ENCODE measurements at regions of chr11 and their contacts with region 1.

Region 1: DNA sequence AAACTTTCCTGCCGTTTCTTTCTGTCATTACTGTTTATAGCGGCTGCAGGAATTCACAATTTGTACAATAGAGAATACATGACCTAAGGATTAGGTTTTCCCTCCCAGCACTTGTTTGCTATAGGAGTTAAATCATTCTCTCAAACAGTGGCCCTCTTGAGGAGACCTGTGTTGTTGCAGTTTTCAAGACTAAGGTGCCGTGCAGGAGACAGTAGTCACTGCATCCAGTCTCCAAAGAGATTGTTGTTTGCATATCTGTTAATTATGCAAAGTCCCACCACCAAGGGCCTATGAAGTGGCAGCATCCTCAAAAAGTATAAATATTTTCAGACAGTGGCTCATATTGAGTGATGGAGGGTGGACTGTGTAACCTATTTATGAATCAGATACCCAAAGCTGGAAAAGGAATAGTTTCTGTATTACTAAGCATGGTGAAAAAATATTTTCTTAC is 2.3 kb downstream of the PRSS23 start:
- DNase-seq: peak; percentile 28
- H3K4me3 ChIP-seq: peak overlapping the region; percentile 78 to 90
- H3K27ac ChIP-seq: peak overlapping the region; percentile 78 to 83
- H3K4me1 ChIP-seq: no peaks in the 10 kb centered on the region
- H3K27me3 ChIP-seq: no peaks in the 10 kb centered on the region
- CTCF ChIP-seq: peak; percentile 39 to 69 (median 50)
- POLR2A ChIP-seq: no peak

Region 2: DNA sequence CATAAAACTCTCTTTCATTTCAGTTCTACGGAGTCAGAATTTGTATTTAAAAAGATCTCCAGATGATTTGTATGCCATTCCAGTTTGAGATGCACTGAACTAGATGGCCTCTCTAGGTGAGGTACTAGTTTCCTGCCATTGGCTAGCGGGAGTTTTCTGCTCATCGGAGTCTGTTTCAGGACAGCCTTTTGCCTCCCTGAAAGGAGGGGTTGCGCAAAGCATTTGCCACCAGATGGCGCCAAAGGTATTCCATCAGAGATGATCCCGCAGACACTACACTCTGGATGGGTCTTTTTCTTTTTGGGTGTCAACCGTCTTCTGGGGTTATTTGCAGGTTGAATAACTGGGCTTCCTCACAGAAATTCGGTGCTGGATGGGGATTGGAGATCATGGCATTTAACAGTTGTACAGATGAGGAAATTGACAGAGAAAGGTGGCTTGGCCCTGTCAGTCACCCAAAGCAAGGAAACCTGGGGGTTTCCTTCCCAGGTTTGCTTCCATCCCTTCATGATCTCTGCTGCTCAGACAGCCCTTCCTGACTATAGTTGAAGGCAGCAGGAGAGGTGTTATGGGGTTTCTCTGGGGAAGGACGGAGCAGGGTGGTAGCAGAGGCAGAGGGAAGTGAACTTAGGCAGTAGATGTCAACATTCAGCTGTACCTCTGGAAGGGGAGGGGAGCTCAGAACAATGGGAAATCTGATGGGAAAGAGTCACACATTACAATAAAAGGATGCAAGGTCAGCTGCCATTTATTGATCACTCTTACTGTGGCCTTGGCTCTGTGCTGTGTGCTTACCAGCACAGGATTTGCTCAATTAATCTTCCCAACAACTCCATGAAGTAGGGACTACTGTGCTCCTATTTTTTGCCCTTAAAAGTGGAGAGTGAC is 346.3 kb before region 1 on chr11:
- intact Hi-C with region 1: loop called (anchors 5 kb)
- DNase-seq: peak; percentile 87
- H3K4me3 ChIP-seq: no peak overlapping the region
- H3K27ac ChIP-seq: peak overlapping the region in 1 of 2 donors; percentile 37
- H3K4me1 ChIP-seq: no peaks in the 10 kb centered on the region
- H3K27me3 ChIP-seq: no peaks in the 10 kb centered on the region
- CTCF ChIP-seq: peak; percentile 70 to 92 (median 86)
- POLR2A ChIP-seq: no peak

Region 3: DNA sequence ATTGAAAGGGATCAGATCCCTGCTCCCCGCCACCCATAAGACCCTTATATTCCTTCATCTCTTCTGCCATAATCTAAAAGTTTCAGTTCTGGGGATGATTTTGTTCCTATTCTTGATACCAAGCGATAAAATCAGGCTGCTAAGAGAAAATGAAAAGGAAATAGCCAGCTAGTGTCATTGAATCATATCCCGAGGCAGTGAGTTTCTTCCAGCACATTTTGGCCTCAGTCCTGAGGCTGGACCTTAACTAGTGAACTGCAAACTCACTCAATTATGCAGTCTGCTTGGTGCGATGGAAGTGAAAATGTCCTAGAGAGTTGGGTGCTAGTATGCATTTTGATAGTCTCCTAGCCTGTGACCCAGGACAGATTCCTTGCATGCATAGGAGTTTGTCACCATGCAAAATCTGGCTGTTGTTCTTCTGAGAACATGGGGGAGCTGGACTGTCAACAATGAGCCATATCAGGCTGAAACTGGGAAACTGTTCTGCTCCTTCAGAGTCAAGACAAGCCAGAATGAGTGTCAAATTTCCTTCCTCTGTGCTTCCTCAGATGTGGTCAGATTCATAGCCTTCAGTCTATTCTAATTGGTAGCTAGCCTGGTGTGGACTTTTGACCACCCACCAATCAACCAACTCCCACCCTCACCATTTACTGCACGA is 325.0 kb before region 1 on chr11:
- intact Hi-C with region 1: loop called (anchors 5 kb)
- DNase-seq: no peak
- H3K4me3 ChIP-seq: no peak overlapping the region
- H3K27ac ChIP-seq: peak overlapping the region; percentile 2 to 38
- H3K4me1 ChIP-seq: no peaks in the 10 kb centered on the region
- H3K27me3 ChIP-seq: no peaks in the 10 kb centered on the region
- CTCF ChIP-seq: no peak
- POLR2A ChIP-seq: no peak

Region 4: GRCh38 chr11:86608251-86608799 is 194.3 kb before region 1 on chr11:
- intact Hi-C with region 1: loop called (anchors 5 kb)
- DNase-seq: peak; percentile 49
- H3K4me3 ChIP-seq: no peak overlapping the region
- H3K27ac ChIP-seq: no peak overlapping the region
- H3K4me1 ChIP-seq: no peaks in the 10 kb centered on the region
- H3K27me3 ChIP-seq: no peaks in the 10 kb centered on the region
- CTCF ChIP-seq: peak; percentile 76 to 84 (median 78)
- POLR2A ChIP-seq: no peak

Region 5: DNA sequence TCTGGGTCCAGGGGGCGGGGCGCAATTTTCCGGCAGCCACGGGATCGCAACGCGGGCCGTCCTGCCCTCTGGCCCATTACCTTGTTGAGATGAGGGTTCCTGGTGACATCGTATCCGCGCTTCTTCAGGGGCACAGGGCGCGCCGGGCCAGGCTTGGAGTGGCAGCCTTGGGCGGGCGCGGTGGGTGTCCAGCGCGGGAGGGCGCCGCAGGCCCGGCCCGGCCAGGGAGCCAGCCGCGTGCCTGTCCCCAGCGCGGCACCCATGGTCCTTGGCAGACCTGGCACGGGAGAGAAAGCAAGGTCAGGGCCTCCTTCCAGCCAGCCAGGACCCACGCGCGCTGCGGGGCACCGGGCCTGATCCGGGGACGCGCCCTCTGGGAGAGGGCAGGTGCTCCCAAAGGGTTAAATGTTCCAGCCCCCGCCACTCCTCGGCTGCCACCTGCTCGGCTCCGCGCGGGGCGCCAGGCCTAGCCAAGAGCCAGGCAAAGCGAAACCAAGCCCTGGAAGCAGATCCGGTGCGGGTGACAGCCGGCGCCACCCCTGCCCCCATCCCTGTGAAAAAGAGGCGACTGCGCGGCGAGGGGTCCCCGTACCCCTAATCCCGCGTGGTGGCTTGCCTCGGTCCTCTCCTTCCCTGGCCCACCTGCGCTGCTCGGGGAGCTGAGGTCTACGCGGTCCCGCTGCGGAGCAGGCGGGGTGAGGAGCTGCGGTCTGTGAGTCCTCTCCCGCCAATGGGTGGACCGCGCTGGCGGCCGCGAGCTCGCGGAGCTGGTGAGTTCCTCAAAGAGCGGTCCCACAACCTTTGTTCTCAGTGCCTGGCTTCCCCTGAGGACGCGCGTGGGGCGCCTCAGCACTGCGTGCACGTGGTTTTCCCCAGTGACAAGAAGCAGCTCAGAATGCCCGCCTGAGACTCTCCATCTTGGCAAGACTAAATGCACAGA is 130.7 kb before region 1 on chr11 and contains the start of gene ME3:
- intact Hi-C with region 1: loop called (anchors 5 kb)
- DNase-seq: peak; percentile 87
- H3K4me3 ChIP-seq: peak within 1 kb of the TSS; percentile 53 to 63
- H3K27ac ChIP-seq: peak within 1 kb of the TSS; percentile 91 to 92
- H3K4me1 ChIP-seq: peaks cover 3% of the 10 kb centered on the region
- H3K27me3 ChIP-seq: no peaks in the 10 kb centered on the region
- CTCF ChIP-seq: no peak
- POLR2A ChIP-seq: peak; percentile 43
- total RNA-seq, gene ME3: 31.4 to 107 TPM

Region 6: DNA sequence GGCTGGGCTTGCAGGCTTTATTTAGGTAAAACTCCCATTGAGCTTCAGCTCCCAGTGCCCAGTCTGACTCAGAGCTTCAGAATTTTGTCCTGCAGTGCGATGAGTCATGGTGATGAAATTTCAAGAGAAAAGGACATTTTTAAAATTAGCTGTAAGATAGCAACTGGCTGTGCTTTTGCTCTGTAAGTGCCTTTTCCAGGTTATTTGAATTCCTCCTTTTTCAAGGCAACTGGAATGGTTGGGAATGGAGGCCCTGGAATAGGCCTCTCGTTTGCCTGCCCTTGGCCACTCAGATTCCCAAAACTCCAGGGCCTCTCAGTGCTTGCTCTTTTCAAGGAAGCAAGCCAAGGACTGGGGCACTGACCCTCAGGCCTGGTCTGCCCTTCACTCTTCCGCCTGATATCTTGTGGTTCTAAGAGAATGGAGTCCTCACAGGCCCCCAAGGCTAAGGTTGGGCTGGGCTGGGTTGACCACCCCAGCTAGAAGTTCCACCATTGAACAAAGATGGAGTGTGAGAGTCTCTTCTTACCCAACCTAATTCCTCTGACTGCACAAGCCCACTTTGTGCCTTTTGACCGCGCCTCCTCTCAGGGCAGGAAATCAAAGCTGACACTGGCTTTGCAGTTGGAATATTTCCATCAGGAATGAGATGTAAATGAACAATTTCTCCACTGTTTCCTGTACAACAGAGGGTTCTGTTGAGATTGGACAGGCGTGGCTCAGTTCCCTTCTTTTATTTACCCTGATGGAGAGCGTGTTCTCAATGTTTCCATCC is 61.7 kb before region 1 on chr11:
- intact Hi-C with region 1: loop called (anchors 5 kb)
- DNase-seq: peak; percentile 46
- H3K4me3 ChIP-seq: no peak overlapping the region
- H3K27ac ChIP-seq: peak overlapping the region; percentile 63
- H3K4me1 ChIP-seq: no peaks in the 10 kb centered on the region
- H3K27me3 ChIP-seq: no peaks in the 10 kb centered on the region
- CTCF ChIP-seq: no peak
- POLR2A ChIP-seq: no peak

Region 7: GRCh38 chr11:86761978-86762377 is 40.6 kb before region 1 on chr11:
- intact Hi-C with region 1: no loop called
- DNase-seq: no peak
- H3K4me3 ChIP-seq: no peak overlapping the region
- H3K27ac ChIP-seq: no peak overlapping the region
- H3K4me1 ChIP-seq: no peaks in the 10 kb centered on the region
- H3K27me3 ChIP-seq: no peaks in the 10 kb centered on the region
- CTCF ChIP-seq: no peak
- POLR2A ChIP-seq: no peak

Measured in prostate gland (tissue), 2 donors.